Panc1 (cell line): ENCODE measurements at regions of chr3 and their contacts with region 1.

Region 1: DNA sequence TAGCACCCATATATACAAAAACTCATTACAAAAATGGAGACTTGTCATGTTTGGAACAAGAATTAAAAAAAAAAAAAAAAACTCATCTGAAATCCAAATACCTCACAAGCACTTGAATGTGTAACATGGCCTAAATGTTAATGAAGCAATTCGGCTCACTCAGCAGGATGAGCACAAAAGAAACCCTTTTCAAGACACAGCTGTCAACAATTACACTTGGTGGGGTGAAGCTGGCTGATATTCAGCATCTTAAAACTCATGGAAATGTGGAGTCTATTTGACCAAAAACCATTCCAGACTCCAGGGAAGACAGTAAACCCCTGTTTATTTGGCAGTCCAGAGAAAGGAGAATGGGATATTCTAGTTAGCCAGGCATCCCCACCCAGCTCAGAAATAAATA is 205.4 kb upstream of the TSC22D2 start:
- DNase-seq: no peak
- ATAC-seq: no peak
- H3K4me3 ChIP-seq: no peak overlapping the region
- H3K27ac ChIP-seq: no peak overlapping the region
- H3K4me1 ChIP-seq: no peaks in the 10 kb centered on the region
- H3K27me3 ChIP-seq: no peaks in the 10 kb centered on the region
- CTCF ChIP-seq: no peak

Region 2: GRCh38 chr3:150020527-150020926 is 182.2 kb before region 1 on chr3:
- CTCF ChIA-PET with region 1: interaction called, 11 read pairs
- POLR2A ChIA-PET with region 1: no interaction called
- in situ Hi-C with region 1: no loop called
- intact Hi-C with region 1: no loop called
- DNase-seq: no peak
- ATAC-seq: peak; percentile 51; the same call in 1 of the 2 replicates
- H3K4me3 ChIP-seq: no peak overlapping the region
- H3K27ac ChIP-seq: no peak overlapping the region
- H3K4me1 ChIP-seq: no peaks in the 10 kb centered on the region
- H3K27me3 ChIP-seq: no peaks in the 10 kb centered on the region
- CTCF ChIP-seq: no peak

Region 3: GRCh38 chr3:150335631-150336030 is 132.9 kb after region 1 on chr3:
- CTCF ChIA-PET with region 1: no interaction called
- POLR2A ChIA-PET with region 1: no interaction called
- in situ Hi-C with region 1: no loop called
- intact Hi-C with region 1: no loop called
- DNase-seq: no peak
- ATAC-seq: no peak
- H3K4me3 ChIP-seq: no peak overlapping the region
- H3K27ac ChIP-seq: peak overlapping the region; percentile 51; the same call in 1 of the 2 replicates
- H3K4me1 ChIP-seq: peaks cover 13% of the 10 kb centered on the region
- H3K27me3 ChIP-seq: no peaks in the 10 kb centered on the region
- CTCF ChIP-seq: no peak